RWPE1 (cell line): ENCODE measurements at regions of chr3 and their contacts with region 1.

Region 1: GRCh38 chr3:73508330-73508954 is 116.3 kb downstream of the PDZRN3 start:
- DNase-seq: peak; percentile 39
- H3K27ac ChIP-seq: no peak overlapping the region
- CTCF ChIP-seq: peak; percentile 74

Region 2: GRCh38 chr3:73681218-73682009 is 173.0 kb after region 1 on chr3:
- CTCF ChIA-PET with region 1: no interaction called
- POLR2A ChIA-PET with region 1: no interaction called
- DNase-seq: no peak
- H3K27ac ChIP-seq: no peak overlapping the region
- CTCF ChIP-seq: no peak

Region 3: DNA sequence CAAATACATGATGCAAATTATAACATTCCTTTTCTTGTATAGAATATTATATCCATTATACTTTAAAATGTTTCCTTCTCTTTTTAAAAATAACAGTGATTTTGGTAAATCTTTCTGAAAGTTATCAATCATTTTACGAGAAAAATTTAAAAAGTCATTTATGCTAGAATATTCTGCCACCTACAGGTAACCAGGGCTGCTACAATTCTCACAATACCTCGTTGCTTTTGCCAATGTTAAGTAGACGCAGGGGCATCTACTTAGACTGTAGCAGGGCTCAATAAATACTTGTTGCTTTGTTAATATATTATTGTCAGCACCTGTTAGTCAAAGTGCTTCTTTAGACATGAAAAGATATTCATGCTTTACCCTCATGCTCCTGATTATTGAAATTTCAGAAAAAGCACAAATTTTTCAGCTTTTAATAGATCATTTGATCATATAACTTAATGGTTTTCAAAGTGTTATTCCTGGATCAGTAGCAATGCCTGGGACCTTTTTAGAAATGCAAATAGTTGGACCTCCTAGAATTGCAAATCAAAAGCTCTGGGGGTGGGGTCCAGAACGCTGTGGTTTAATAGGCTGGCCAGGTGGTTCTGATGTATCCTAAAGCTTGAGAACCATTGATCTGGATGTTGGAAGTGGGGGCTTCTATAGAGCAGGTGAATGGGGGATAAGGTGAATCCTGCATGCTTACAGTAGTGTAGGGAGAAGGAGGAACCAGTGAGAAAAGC is 339.9 kb after region 1 on chr3:
- CTCF ChIA-PET with region 1: interaction called, 20 read pairs
- POLR2A ChIA-PET with region 1: no interaction called
- DNase-seq: peak; percentile 23
- H3K27ac ChIP-seq: no peak overlapping the region
- CTCF ChIP-seq: peak; percentile 73